H1 (cell line): ENCODE measurements at regions of chr7 and their contacts with region 1.

Region 1: GRCh38 chr7:51162724-51163329 is 153.8 kb downstream of the COBL start:
- DNase-seq: peak; percentile 61 to 89
- H3K4me3 ChIP-seq: no peak overlapping the region
- H3K27ac ChIP-seq: no peak overlapping the region
- H3K4me1 ChIP-seq: peaks cover 0 to 5% (median 0%) of the 10 kb centered on the region in 4 experiments; a peak in 2 of 7 replicates
- H3K27me3 ChIP-seq: no peaks in the 10 kb centered on the region
- CTCF ChIP-seq: peak in 2 of 3 experiments; percentile 92 to 94; a peak in 3 of 4 replicates
- EP300 ChIP-seq: no peak
- POLR2A ChIP-seq: no peak
- RAD21 ChIP-seq: peak; percentile 85 to 91

Region 2: GRCh38 chr7:50588937-50589336 is 573.9 kb before region 1 on chr7:
- CTCF ChIA-PET with region 1: interaction called, 12 read pairs
- POLR2A ChIA-PET with region 1: no interaction called
- DNase-seq: peak in 1 of 2 experiments; percentile 62
- H3K4me3 ChIP-seq: no peak overlapping the region
- H3K27ac ChIP-seq: no peak overlapping the region
- H3K4me1 ChIP-seq: no peaks in the 10 kb centered on the region; a peak in 1 of 7 replicates
- H3K27me3 ChIP-seq: no peaks in the 10 kb centered on the region
- CTCF ChIP-seq: peak; percentile 47 to 79 (median 58)
- EP300 ChIP-seq: no peak
- POLR2A ChIP-seq: no peak
- RAD21 ChIP-seq: peak; percentile 41 to 59; a peak in 3 of 4 replicates

Region 3: DNA sequence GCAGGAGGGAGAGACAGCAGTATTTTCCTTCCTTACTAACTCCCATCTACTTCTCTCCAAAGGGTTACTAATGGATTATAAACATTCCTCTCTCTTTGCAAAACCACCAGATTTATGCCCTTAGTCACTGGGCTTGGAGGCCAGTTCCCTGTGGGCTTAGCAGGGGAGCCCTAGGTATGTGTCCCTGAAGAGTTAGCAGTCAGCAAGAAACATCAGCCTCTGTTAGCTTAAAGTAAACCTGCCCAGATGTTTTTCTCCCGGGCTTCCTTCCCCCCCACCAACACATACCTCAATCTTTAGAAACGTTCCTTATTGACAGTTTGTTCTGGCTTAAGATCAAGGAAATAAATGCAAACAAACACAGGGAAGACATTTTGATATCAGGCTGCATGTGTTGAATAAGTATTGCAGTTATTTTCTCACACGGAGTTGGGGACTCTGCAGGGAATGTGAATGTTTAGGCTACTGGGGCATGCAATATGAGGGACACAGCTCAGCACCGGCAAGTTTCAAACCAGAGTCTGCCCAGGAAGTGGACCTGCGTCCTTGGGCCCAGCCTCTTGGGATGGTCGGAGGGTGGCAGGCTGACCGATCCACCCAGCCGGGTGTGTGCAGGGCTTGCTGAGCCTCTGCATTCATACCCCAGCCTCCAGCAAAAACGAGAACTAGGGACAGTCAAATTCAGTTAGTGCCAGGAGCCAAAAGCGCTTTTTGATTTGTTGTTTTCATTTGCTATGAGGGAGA is 128.1 kb before region 1 on chr7:
- CTCF ChIA-PET with region 1: interaction called, 12 read pairs
- POLR2A ChIA-PET with region 1: no interaction called
- DNase-seq: no peak
- H3K4me3 ChIP-seq: no peak overlapping the region
- H3K27ac ChIP-seq: no peak overlapping the region
- H3K4me1 ChIP-seq: peaks cover 2 to 9% (median 7%) of the 10 kb centered on the region in 4 experiments; a peak in 6 of 7 replicates
- H3K27me3 ChIP-seq: no peaks in the 10 kb centered on the region
- CTCF ChIP-seq: no peak
- EP300 ChIP-seq: no peak
- POLR2A ChIP-seq: no peak
- RAD21 ChIP-seq: no peak

Region 4: DNA sequence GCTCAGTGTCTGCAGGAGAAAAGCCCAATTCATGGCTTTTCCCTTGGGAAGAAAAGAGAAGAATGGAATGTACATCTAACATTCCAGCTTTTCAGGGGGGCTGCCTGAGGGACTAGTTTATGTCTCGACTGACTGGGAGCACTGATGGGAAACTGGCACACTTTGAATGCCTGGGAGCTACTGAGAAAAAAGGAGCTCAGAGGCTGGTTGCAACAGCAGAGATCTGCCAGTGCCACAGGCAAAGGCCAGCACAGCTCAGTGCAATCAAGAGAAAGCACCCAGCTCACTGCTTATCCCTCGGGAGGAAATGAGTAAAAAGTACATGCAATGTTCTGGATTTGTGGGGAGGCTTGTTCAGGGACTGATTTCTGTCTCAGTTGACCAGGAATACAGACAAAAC is 72.4 kb before region 1 on chr7:
- CTCF ChIA-PET with region 1: interaction called, 23 read pairs
- POLR2A ChIA-PET with region 1: no interaction called
- DNase-seq: no peak
- H3K4me3 ChIP-seq: no peak overlapping the region
- H3K27ac ChIP-seq: no peak overlapping the region
- H3K4me1 ChIP-seq: peaks cover 0 to 10% (median 7%) of the 10 kb centered on the region in 4 experiments; a peak in 5 of 7 replicates
- H3K27me3 ChIP-seq: no peaks in the 10 kb centered on the region
- CTCF ChIP-seq: no peak
- EP300 ChIP-seq: no peak
- POLR2A ChIP-seq: no peak
- RAD21 ChIP-seq: no peak

Region 5: DNA sequence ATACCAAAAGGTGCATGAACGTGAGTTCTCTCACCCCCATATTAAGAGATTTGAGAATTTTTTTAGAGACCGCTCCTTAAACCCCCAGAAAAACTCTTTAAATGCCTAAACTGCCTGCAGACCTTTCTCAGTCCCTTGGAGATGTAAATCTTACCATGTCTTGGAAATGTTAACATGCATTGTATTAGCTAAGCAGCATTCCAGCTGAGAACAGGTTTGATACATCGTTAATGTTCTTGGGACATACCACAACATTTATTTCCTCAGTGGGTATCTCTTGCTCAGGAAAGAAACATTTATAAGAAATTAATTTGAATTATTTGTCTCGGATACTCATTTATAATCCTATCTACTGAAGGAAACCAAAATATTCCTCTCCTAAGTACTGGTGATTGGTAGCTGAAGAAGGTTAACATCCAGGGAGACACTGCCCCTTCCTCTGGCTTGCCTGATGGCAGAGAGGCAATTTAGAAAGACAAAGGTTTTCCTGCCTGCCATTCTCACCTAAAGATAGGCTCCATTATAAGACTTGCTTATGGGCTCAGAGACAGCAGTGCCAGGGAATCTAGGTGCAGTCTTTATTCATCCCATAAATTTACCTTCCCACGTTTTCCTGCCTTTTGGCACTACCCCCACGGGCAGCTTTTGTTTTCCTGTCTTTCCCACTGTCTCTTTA is 12.6 kb after region 1 on chr7:
- CTCF ChIA-PET with region 1: interaction called, 16 read pairs
- POLR2A ChIA-PET with region 1: no interaction called
- DNase-seq: no peak
- H3K4me3 ChIP-seq: peak overlapping the region in 1 of 4 experiments; percentile 27; a peak in 2 of 8 replicates
- H3K27ac ChIP-seq: peak overlapping the region; percentile 16; the same call in 1 of the 2 replicates
- H3K4me1 ChIP-seq: peaks cover 6 to 17% (median 11%) of the 10 kb centered on the region in 4 experiments; a peak in 5 of 7 replicates
- H3K27me3 ChIP-seq: no peaks in the 10 kb centered on the region
- CTCF ChIP-seq: no peak
- EP300 ChIP-seq: 0 out of 3 replicates have a peak, but pooled peaks of 1 of the 2 experiments have one; percentile 24
- POLR2A ChIP-seq: no peak
- RAD21 ChIP-seq: no peak

Region 6: DNA sequence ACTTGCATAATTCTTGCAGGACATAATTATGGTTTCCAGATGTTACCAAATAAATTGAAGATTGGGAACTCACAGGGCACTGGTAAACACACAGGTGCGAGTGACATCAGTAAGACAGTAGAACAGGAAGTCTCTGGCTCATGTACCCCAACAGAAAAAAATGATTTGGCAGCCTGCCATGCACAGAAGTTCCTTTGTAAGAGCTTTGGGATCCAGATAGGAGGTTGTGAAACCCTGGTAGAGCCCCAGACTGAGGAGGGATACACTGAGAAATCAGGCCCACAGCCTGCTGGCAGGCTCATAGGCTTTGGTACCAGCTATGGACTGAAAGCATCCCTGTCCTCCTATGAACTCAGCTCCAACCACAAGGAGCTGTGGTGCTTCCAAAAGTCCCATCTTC is 35.8 kb after region 1 on chr7:
- CTCF ChIA-PET with region 1: no interaction called
- POLR2A ChIA-PET with region 1: no interaction called
- DNase-seq: no peak
- H3K4me3 ChIP-seq: no peak overlapping the region
- H3K27ac ChIP-seq: no peak overlapping the region
- H3K4me1 ChIP-seq: no peaks in the 10 kb centered on the region
- H3K27me3 ChIP-seq: no peaks in the 10 kb centered on the region
- CTCF ChIP-seq: no peak
- EP300 ChIP-seq: no peak
- POLR2A ChIP-seq: no peak
- RAD21 ChIP-seq: no peak

Region 7: DNA sequence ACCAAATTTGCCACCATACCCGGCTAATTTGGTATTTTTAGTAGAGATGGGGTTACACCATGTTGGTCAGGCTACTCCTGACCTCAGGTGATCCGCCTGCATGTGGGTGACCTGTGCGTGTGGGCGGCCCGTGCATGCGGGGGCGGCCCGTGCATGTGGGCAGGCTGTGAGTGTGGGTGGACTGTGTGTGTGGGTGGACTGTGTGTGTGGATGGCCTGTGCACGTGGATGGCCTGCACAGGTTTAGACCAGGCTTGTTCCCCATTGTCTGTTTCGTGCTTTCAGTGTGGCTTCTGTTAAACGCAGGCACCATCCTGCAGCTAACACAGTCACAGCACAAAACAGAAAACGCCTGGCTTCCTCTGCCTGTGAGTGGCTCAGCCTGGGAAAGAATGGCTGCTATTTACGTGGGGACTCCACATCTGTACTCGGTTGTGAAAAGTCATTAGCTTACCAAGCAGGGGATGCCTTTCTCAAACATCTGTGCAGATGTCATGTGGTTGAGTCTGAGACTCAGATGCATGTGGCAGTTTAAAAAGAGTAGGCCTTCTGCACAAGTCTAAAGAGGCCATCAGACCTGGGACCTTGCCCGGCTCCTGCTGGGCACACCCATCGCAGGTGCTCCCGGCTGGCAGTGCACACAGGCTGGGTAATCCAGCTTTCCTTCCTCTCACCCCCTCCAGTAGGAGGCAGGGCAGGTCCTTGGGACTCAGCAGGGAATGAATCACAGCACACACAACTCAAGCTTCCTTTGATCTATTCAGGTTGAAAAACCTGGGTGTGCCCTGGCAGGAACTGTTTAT is 62.2 kb after region 1 on chr7:
- CTCF ChIA-PET with region 1: interaction called, 13 read pairs
- POLR2A ChIA-PET with region 1: no interaction called
- DNase-seq: peak; percentile 31 to 50
- H3K4me3 ChIP-seq: no peak overlapping the region
- H3K27ac ChIP-seq: no peak overlapping the region
- H3K4me1 ChIP-seq: peaks cover 5 to 16% (median 10%) of the 10 kb centered on the region in 4 experiments; a peak in 6 of 7 replicates
- H3K27me3 ChIP-seq: no peaks in the 10 kb centered on the region; a peak in 1 of 7 replicates
- CTCF ChIP-seq: peak; percentile 61 to 86 (median 72)
- EP300 ChIP-seq: no peak
- POLR2A ChIP-seq: no peak
- RAD21 ChIP-seq: peak; percentile 67 to 79

Region 8: GRCh38 chr7:51246258-51247245 is 83.7 kb after region 1 on chr7:
- CTCF ChIA-PET with region 1: no interaction called
- POLR2A ChIA-PET with region 1: no interaction called
- DNase-seq: no peak
- H3K4me3 ChIP-seq: no peak overlapping the region
- H3K27ac ChIP-seq: no peak overlapping the region
- H3K4me1 ChIP-seq: peaks cover 0 to 8% (median 0%) of the 10 kb centered on the region in 4 experiments; a peak in 2 of 7 replicates
- H3K27me3 ChIP-seq: no peaks in the 10 kb centered on the region
- CTCF ChIP-seq: no peak
- EP300 ChIP-seq: no peak
- POLR2A ChIP-seq: no peak
- RAD21 ChIP-seq: no peak